Transverse colon (tissue), 4 donors: ENCODE measurements at regions of chr17 and their contacts with region 1.

Region 1: GRCh38 chr17:11250161-11250560 is 9.1 kb downstream of the SHISA6 start:
- DNase-seq: no peak
- H3K4me3 ChIP-seq: no peak overlapping the region
- H3K27ac ChIP-seq: no peak overlapping the region
- H3K4me1 ChIP-seq: no peaks in the 10 kb centered on the region
- H3K27me3 ChIP-seq: peaks cover 1% of the 10 kb centered on the region
- CTCF ChIP-seq: no peak
- EP300 ChIP-seq: no peak
- POLR2A ChIP-seq: no peak

Region 2: DNA sequence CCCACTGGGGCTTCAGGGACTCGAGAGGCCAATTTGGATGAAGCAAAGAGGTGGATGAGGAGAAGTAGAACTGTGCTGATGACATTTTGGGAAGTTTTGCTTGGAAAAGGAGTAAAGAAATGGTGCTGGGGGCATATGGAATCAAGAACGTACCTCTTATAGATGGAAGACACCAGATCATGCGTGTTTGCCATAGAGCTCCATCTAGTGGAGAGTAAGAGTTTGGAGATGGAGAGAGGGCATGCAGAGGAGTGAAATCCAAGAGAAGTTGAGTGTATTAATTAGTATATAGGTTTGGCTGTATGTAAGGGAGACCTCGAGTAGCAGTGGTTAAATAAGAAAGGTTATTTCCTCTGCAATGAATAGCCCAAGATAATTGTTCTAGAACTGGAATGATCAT is 46.8 kb after region 1 on chr17:
- in situ Hi-C with region 1: no loop called
- intact Hi-C with region 1: loop called (anchors 1 kb)
- DNase-seq: no peak
- H3K4me3 ChIP-seq: no peak overlapping the region
- H3K27ac ChIP-seq: no peak overlapping the region
- H3K4me1 ChIP-seq: no peaks in the 10 kb centered on the region
- H3K27me3 ChIP-seq: no peaks in the 10 kb centered on the region
- CTCF ChIP-seq: peak in 2 of 5 experiments; percentile 26 to 42
- EP300 ChIP-seq: no peak
- POLR2A ChIP-seq: no peak